ENCODE measurements at regions of chr20 and their contacts with region 1.

Region 1: DNA sequence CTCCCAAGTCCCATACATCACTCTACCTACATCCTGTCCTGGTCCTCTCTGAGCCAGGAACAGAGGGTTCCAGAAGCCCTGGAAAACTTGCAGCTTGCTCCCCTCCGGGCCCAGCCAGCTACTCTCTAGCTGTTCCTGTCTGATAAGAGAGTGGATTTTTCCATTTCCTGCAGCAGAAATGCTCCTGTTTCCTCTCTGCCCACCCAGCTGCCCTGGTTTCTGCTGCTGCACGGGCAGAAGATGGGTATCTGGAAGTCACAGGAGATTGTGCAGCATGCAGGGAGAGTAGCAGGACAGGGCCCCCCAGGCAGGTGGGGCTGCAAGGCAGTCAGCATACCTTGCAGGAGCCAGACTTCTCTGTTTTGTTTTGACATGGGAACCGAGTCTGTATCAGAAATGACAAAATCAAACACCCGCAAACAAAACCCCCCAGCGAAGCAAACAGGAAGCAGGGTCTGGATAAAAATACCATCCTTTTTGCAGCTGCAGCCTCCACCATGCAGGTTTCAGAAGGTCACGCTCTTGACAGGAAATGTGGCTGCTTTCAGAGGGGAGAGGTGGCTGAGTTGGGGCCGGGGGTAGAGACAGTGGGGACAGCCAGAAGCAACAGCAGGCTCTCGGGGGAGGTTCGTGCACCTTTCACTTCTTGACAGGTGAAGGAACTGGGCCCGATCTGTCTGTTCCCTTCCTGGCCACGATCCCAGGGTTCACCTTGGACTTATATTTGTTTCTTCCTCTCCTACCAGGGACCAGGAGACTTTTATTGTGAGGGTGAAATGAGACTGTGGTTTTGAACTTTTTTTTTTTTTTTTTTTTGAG is 50.8 kb upstream of the FAM83D start:
- DNase-seq: no peak
- H3K4me3 ChIP-seq: no peak overlapping the region
- H3K27ac ChIP-seq: no peak overlapping the region
- H3K4me1 ChIP-seq: no peaks in the 10 kb centered on the region
- H3K27me3 ChIP-seq: no peaks in the 10 kb centered on the region
- CTCF ChIP-seq: no peak

Region 2: DNA sequence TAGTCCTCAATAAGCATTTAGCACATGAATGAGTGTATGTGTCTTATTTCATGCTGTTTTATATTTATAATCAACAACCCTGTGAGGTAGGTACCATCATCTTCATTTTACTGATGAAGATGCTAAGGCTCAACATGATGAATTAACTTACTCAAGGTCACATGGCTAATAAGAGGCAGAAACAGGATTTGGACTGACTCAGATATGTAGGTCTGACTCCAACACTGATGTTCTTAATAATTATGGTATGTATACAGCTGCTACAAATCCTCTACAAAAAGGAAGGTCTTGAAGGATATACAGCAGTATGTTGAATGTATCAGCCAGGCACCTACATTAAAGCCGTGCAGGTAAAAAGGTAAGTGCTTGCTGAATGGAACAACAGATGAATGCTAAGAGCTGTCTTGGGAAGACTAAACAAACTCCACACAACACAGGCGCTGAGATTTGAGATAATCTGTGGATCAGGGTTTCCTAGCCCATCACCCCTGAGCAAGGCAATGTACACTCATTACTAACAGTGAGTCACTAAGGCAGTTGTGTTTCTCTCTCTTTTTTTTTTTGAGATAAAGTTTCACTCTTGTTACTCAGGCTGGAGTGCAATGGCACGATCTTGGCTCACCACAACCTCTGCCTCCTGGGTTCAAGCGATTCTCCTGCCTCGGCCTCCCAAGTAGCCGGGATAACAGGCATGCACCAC is 874.1 kb before region 1 on chr20:
- CTCF ChIA-PET with region 1: no interaction called
- dilution Hi-C with region 1: no loop called
- in situ Hi-C with region 1: no loop called
- intact Hi-C with region 1: no loop called
- DNase-seq: peak; percentile 64
- H3K4me3 ChIP-seq: no peak overlapping the region
- H3K27ac ChIP-seq: peak overlapping the region; percentile 5
- H3K4me1 ChIP-seq: peaks cover 6% of the 10 kb centered on the region
- H3K27me3 ChIP-seq: no peaks in the 10 kb centered on the region
- CTCF ChIP-seq: no peak

Region 3: GRCh38 chr20:38764567-38765355 is 110.6 kb before region 1 on chr20:
- CTCF ChIA-PET with region 1: no interaction called
- dilution Hi-C with region 1: loop called (anchors 5 kb)
- in situ Hi-C with region 1: no loop called
- intact Hi-C with region 1: no loop called
- DNase-seq: peak; percentile 90
- H3K4me3 ChIP-seq: no peak overlapping the region
- H3K27ac ChIP-seq: no peak overlapping the region
- H3K4me1 ChIP-seq: peaks cover 12% of the 10 kb centered on the region
- H3K27me3 ChIP-seq: no peaks in the 10 kb centered on the region
- CTCF ChIP-seq: no peak

Region 4: GRCh38 chr20:39070484-39071231 is 195.3 kb after region 1 on chr20:
- CTCF ChIA-PET with region 1: no interaction called
- dilution Hi-C with region 1: no loop called
- in situ Hi-C with region 1: no loop called
- intact Hi-C with region 1: no loop called
- DNase-seq: peak; percentile 72
- H3K4me3 ChIP-seq: no peak overlapping the region
- H3K27ac ChIP-seq: peak overlapping the region; percentile 17
- H3K4me1 ChIP-seq: peaks cover 18% of the 10 kb centered on the region
- H3K27me3 ChIP-seq: no peaks in the 10 kb centered on the region
- CTCF ChIP-seq: no peak

Region 5: GRCh38 chr20:39670988-39671387 is 795.6 kb after region 1 on chr20:
- CTCF ChIA-PET with region 1: no interaction called
- dilution Hi-C with region 1: no loop called
- in situ Hi-C with region 1: no loop called
- intact Hi-C with region 1: loop called (anchors 5 kb)
- DNase-seq: no peak
- H3K4me3 ChIP-seq: no peak overlapping the region
- H3K27ac ChIP-seq: no peak overlapping the region
- H3K4me1 ChIP-seq: no peaks in the 10 kb centered on the region
- H3K27me3 ChIP-seq: no peaks in the 10 kb centered on the region
- CTCF ChIP-seq: no peak